Ascending aorta (tissue), 2 donors: ENCODE measurements at regions of chr3 and their contacts with region 1.

Region 1: DNA sequence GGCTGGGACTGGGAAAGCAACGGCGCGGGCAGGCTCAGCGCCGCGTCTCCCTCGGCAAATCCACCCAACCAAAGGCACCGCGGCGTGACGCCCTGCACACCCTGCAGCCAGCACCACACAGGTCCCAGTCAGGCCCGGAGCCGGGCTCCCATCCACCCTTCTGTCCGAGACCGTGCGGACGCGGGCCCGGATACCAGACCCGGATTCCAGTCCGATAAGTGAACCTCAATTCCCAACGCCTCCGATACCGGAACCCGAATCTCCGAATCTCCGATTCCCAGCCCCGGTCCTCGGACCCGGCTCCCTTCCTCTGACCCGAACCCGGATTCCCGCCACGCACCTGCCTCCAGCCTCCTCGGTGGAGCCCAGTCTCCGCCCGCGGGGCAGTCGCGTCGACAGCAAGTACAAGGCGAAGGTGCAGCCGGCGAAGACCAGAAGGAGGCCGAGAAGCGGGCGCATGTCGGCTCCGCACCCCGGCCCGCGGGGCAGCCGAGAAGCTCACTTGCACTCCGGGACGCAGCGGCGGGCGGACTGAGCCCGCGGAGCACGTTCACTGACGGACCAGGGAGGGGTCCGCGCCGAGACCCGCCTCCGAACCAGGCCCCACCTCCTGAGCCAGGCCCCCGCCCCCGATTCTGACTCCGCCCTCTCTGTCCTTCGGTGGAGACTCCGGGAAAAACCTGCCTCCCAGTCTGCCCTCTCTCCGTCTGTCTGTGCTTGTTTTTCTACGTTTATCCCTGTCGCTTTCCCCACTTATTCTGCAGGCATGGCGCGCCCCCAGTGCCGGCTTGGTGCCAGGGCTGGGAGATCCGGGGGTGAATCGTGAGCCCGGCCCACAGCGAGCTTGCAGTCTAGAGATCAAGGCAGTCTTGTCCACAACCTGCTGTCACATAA is at the start of gene TMEM41A:
- DNase-seq: peak; percentile 38 to 95
- H3K4me3 ChIP-seq: peak within 1 kb of the TSS; percentile 78 to 99
- H3K27ac ChIP-seq: peak within 1 kb of the TSS; percentile 76 to 87
- H3K4me1 ChIP-seq: peaks cover 5 to 8% of the 10 kb centered on the region in 2 donors
- H3K27me3 ChIP-seq: no peaks in the 10 kb centered on the region
- CTCF ChIP-seq: no peak
- total RNA-seq, gene TMEM41A: 24.2 TPM

Region 2: GRCh38 chr3:184811999-184812661 is 686.6 kb before region 1 on chr3 and contains the start of gene VPS8:
- intact Hi-C with region 1: loop called (anchors 2 kb)
- DNase-seq: peak; percentile 82 to 98
- H3K4me3 ChIP-seq: peak within 1 kb of the TSS; percentile 73 to 93
- H3K27ac ChIP-seq: peak within 1 kb of the TSS; percentile 56 to 79
- H3K4me1 ChIP-seq: peaks cover 0 to 6% of the 10 kb centered on the region in 2 donors
- H3K27me3 ChIP-seq: no peaks in the 10 kb centered on the region
- CTCF ChIP-seq: peak; percentile 33 to 61 (median 49)
- total RNA-seq, gene VPS8: 24.9 TPM

Region 3: GRCh38 chr3:185558395-185558794 is 59.6 kb after region 1 on chr3:
- intact Hi-C with region 1: loop called (anchors 2 kb)
- DNase-seq: no peak
- H3K4me3 ChIP-seq: no peak overlapping the region
- H3K27ac ChIP-seq: no peak overlapping the region
- H3K4me1 ChIP-seq: no peaks in the 10 kb centered on the region
- H3K27me3 ChIP-seq: no peaks in the 10 kb centered on the region
- CTCF ChIP-seq: no peak

Region 4: GRCh38 chr3:185572183-185572582 is 73.4 kb after region 1 on chr3:
- intact Hi-C with region 1: no loop called
- DNase-seq: no peak
- H3K4me3 ChIP-seq: no peak overlapping the region
- H3K27ac ChIP-seq: no peak overlapping the region
- H3K4me1 ChIP-seq: no peaks in the 10 kb centered on the region
- H3K27me3 ChIP-seq: no peaks in the 10 kb centered on the region
- CTCF ChIP-seq: no peak

Region 5: DNA sequence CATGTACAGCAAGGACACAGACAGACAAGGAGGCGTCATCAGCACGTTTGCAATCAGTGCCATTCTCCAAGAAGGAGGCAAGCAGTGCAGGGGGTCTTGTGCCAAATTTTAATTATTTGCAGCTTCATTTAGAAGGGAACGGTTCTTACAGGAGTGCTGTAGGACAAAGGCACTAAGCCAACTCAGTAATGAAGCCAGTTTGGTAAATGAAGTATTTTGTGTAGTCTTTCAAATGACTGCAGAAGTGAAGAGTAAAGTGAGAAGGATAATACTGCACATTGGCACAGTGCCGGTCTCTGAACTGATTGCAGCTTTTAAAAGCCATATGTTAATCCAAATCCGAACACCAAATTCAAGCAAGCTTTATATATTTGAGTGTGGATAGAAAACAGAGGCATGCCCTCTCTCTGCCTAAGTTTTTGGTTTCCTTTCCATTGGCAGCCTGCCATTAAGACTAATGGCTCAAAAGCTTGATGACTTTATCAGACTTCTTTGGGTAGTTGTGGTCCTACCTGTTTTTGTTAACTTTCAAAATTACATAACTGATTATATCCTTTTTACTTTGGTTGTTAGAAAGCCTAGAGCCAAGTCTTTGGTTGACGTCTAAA is 188.6 kb after region 1 on chr3:
- intact Hi-C with region 1: no loop called
- DNase-seq: no peak
- H3K4me3 ChIP-seq: no peak overlapping the region
- H3K27ac ChIP-seq: no peak overlapping the region
- H3K4me1 ChIP-seq: no peaks in the 10 kb centered on the region
- H3K27me3 ChIP-seq: no peaks in the 10 kb centered on the region
- CTCF ChIP-seq: no peak